Activated CD8-positive, alpha-beta memory T cell treated with anti-CD3 and anti-CD28 coated beads, Interleukin-2, amount 10 ng/mL, durations not matched to agents 7 days and 5 days (primary cell): ENCODE measurements at regions of chr9 and their contacts with region 1.

Region 1: DNA sequence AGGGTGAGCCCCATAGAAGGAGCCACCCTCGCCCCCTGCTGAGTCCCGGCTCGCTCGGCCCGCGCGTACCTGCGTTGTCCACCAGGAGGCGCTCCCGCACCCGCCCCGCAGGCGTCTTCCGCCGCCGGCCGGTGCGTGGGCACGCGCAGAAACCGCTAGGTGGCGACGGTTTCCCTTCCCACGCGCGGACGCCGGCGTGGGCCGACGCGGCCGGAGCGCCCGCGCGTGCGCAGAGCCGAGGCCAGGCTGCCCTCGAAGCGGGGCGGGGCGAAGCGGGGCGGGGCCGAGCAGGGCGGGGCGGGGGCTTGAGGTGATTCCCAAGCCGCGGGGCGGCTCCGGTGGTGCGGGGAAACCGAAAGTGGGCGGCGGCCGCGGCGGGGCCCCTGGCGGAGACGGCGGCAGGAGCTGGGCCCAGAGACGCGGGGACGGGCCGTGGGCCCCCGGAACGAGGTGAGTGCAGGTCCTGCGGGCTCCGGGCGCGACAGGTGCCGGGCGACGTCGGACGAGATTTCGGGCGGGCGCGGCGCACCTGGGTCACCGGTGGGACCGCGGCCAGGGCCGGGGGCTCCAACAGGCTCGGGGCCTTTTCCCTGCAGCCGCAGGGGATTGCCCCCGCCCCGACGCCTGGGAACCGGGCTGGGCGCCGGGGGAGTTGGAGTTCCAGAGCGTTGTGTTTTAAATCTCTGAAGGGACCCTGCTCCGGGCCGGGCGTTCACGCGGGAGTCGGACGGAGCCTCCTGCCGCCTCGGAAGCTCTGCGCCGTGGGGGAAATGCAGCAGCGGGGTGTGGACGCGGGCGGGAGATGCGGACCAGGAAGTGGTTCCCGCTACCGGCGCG is at the start of gene TDRD7:
- DNase-seq: peak; percentile 87
- ATAC-seq: peak; percentile 87
- H3K4me3 Mint-ChIP-seq: peak within 1 kb of the TSS; percentile 76
- H3K27ac Mint-ChIP-seq: peak within 1 kb of the TSS; percentile 64
- H3K4me1 Mint-ChIP-seq: peaks cover 22% of the 10 kb centered on the region
- H3K27me3 Mint-ChIP-seq: peaks cover 41% of the 10 kb centered on the region
- total RNA-seq, gene TDRD7: 10.3 to 15.3 TPM

Region 2: DNA sequence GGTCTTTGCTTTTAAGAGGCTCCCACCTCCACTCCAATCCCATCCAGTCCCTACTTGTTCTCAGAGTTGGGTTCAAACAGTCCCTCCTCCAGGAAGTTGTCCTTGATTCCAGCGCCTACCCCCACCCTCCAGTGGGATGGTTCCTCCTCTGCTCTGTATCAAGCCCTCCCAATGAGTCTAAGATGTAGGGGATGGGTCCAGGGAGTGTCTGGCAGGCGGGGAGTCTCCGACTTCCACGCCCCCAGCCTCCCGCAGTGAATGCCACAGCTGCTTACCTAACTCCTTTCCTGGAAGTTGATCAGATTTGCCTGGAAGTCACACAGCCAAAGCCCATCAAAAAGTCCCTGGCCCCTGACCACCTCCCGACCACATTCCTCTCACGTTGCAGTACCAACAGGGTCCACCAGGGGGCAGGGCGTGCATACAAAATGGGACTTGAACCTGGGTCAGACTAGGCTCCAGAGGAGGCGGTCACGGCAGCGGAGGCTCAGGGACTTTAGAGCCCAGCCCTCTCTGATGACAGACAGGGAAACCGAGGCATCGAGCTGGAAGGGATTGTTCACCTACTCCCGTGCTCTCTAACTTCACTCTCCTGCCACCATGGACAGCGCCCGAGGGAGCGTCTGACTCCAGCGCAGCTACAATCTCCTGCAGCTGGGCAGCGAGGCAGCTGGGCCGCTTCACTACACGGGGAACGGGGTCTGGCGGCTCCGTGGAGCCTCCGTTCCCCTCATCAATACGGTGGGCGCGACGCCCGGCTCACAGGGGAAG is 25.1 kb before region 1 on chr9:
- CTCF ChIA-PET with region 1: interaction called, 14 read pairs
- DNase-seq: peak; percentile 83
- ATAC-seq: peak; percentile 74
- H3K4me3 Mint-ChIP-seq: no peak overlapping the region
- H3K27ac Mint-ChIP-seq: no peak overlapping the region
- H3K4me1 Mint-ChIP-seq: peaks cover 34% of the 10 kb centered on the region
- H3K27me3 Mint-ChIP-seq: peaks cover 66% of the 10 kb centered on the region

Region 3: GRCh38 chr9:97501177-97501971 is 89.4 kb after region 1 on chr9 and contains the start of gene TMOD1:
- CTCF ChIA-PET with region 1: interaction called, 13 read pairs
- DNase-seq: peak; percentile 52
- ATAC-seq: peak; percentile 86
- H3K4me3 Mint-ChIP-seq: peak within 1 kb of the TSS; percentile 63
- H3K27ac Mint-ChIP-seq: no peak within 1 kb of the TSS
- H3K4me1 Mint-ChIP-seq: peaks cover 18% of the 10 kb centered on the region
- H3K27me3 Mint-ChIP-seq: peaks cover 50% of the 10 kb centered on the region
- total RNA-seq, gene TMOD1: 0.88 to 1.0 TPM